A673 (cell line): ENCODE measurements at regions of chr5 and their contacts with region 1.

Region 1: DNA sequence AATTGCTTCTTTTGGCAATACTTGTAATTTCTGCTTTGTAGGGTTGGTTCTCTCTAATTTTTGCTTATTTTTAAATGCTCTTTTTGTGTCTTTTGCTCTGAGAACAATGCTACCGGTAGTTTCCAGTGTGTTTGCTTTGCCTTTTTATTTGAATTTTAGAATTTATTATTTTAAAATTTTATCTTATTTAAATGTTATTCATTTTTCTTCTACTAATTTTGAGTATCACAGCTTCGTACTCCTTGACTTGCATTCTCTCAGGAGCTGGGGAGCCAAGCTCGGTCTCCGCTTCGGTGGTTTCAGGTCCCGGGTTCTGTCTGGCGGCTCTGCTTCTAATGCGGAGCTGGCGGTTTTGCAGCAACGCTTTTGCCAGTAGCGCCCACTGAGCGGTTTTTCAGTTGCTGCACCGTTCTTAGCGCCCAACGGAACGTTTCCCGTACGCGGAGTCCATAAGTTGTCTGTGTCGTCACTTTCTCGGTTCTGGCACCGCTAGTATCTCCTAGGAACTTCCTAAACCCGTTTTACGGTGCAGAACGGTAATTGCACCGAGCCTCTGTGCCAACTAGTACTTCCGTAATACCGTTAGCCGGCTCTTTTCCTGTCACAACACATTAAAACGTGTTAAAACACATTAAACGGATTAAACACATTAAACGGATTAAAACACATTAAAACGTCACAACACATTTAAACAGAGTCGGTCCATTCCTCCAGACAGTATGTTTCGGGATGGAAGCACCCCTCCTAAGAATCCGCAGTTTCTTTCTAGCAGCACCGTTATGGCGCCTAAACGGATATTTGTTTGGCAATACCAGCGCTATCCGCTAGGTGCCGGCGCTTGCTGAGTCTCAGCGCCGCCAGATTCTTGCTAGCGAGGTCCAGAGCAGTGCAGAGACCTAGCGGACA is 45.6 kb downstream of the ANXA2R start:
- DNase-seq: peak; percentile 96
- H3K4me3 ChIP-seq: peak overlapping the region; percentile 61
- H3K27ac ChIP-seq: peak overlapping the region; percentile 77
- H3K4me1 ChIP-seq: peaks cover 9% of the 10 kb centered on the region
- H3K27me3 ChIP-seq: no peaks in the 10 kb centered on the region
- CTCF ChIP-seq: peak; percentile 88

Region 2: GRCh38 chr5:41908374-41909079 is 1086.0 kb before region 1 on chr5:
- CTCF ChIA-PET with region 1: no interaction called
- POLR2A ChIA-PET with region 1: interaction called, 16 read pairs
- intact Hi-C with region 1: no loop called
- DNase-seq: no peak
- H3K4me3 ChIP-seq: no peak overlapping the region
- H3K27ac ChIP-seq: no peak overlapping the region
- H3K4me1 ChIP-seq: peaks cover 6% of the 10 kb centered on the region
- H3K27me3 ChIP-seq: no peaks in the 10 kb centered on the region
- CTCF ChIP-seq: no peak

Region 3: GRCh38 chr5:42767491-42768105 is 226.9 kb before region 1 on chr5:
- CTCF ChIA-PET with region 1: no interaction called
- POLR2A ChIA-PET with region 1: no interaction called
- intact Hi-C with region 1: no loop called
- DNase-seq: peak; percentile 50
- H3K4me3 ChIP-seq: no peak overlapping the region
- H3K27ac ChIP-seq: no peak overlapping the region
- H3K4me1 ChIP-seq: peaks cover 1% of the 10 kb centered on the region
- H3K27me3 ChIP-seq: no peaks in the 10 kb centered on the region
- CTCF ChIP-seq: peak; percentile 65

Region 4: DNA sequence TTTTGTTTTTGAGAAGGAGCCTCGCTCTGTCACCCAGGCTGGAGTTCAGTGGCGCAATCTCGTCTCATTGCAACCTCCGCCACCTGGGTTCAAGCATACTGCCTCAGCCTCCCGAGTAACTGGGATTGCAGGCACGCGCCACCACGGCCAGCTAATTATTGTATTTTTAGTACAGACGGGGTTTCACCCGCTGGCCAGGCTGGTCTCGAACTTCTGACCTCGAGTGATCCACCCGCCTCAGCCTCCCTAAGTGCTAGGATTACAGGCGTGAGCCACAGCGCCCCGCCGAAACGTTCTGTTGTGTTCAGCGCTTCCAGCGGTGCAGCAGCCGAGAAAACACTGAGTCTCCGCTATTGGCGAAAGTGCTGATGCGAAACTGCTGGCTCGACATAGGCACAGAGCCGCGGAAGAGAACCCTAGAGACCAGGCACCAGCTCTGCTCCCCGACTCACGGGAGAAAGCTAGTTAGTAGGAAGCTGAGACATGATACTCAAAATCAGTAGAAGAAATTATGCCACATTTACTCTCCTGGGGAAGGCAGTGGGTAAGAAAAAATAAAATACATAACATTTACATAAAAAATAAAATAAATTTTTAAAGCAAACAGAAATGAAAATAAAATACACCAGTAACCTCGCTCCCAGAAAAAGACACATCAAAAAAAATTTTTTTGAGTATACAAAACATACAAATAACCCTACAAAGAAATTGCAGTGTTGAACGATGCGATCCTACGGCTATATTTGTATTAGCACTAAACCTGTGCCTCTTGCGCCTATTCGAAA is 14.1 kb after region 1 on chr5:
- CTCF ChIA-PET with region 1: interaction called, 10 read pairs
- POLR2A ChIA-PET with region 1: no interaction called
- intact Hi-C with region 1: no loop called
- DNase-seq: peak; percentile 98
- H3K4me3 ChIP-seq: peak overlapping the region; percentile 52
- H3K27ac ChIP-seq: peak overlapping the region; percentile 85
- H3K4me1 ChIP-seq: peaks cover 11% of the 10 kb centered on the region
- H3K27me3 ChIP-seq: no peaks in the 10 kb centered on the region
- CTCF ChIP-seq: peak; percentile 39; the same call in 1 of the 2 replicates

Region 5: GRCh38 chr5:43019614-43020293 is 25.3 kb after region 1 on chr5:
- CTCF ChIA-PET with region 1: interaction called, 3 read pairs
- POLR2A ChIA-PET with region 1: no interaction called
- intact Hi-C with region 1: loop called (anchors 2 kb)
- DNase-seq: peak; percentile 89
- H3K4me3 ChIP-seq: peak overlapping the region; percentile 81
- H3K27ac ChIP-seq: peak overlapping the region; percentile 31
- H3K4me1 ChIP-seq: peaks cover 16% of the 10 kb centered on the region
- H3K27me3 ChIP-seq: no peaks in the 10 kb centered on the region
- CTCF ChIP-seq: peak; percentile 52

Region 6: DNA sequence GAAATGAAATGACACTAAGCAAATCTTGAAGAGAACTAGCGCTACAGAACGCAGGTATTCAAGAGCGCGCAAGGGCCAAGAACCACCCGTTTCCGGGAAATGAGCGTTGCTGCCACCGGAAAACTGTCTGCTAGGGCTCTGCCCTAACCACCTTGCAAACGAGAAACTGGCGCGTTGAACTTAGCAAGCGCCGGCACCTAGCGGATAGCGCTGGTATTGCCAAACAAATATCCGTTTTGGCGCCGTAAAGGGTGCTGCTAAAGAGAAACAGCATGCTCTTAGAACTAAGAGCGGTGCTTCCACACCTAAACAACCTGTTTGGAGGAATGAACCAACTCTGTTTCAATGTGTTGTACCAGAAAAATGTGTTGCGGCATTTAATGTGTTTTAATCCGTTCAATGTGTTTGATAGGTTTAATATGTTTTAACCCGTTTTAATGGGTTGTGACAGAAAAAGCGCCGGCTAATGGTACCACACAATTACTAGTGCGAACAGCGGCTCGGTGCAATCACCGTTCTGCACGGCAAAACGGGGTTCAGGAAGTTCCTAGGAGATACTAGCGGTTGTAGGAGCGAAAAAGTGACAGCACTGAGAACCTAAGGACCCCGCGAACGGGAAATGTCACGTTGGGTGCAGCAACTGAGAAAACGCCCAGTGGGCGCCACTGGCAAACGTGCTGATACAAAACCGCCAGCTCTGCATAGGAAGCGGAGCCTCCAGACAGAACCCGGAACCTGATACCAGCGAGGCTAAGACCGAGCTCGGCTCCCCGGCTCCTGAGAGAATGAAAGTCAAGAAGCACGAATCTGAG is 46.0 kb after region 1 on chr5 and contains the start of gene ANXA2R:
- CTCF ChIA-PET with region 1: no interaction called
- POLR2A ChIA-PET with region 1: no interaction called
- intact Hi-C with region 1: loop called (anchors 1 kb)
- DNase-seq: peak; percentile 97
- H3K4me3 ChIP-seq: peak within 1 kb of the TSS; percentile 62
- H3K27ac ChIP-seq: peak within 1 kb of the TSS; percentile 88
- H3K4me1 ChIP-seq: no peaks in the 10 kb centered on the region
- H3K27me3 ChIP-seq: no peaks in the 10 kb centered on the region
- CTCF ChIP-seq: peak; percentile 78
- total RNA-seq, gene ANXA2R: 1.4 and 1.9 TPM in 2 replicates